AG04449 (cell line): ENCODE measurements at regions of chr1 and their contacts with region 1.

Region 1: GRCh38 chr1:207885129-207886032 is 25.5 kb downstream of the CD34 start:
- DNase-seq: peak; percentile 37
- H3K4me3 ChIP-seq: no peak overlapping the region
- CTCF ChIP-seq: peak; percentile 92

Region 2: DNA sequence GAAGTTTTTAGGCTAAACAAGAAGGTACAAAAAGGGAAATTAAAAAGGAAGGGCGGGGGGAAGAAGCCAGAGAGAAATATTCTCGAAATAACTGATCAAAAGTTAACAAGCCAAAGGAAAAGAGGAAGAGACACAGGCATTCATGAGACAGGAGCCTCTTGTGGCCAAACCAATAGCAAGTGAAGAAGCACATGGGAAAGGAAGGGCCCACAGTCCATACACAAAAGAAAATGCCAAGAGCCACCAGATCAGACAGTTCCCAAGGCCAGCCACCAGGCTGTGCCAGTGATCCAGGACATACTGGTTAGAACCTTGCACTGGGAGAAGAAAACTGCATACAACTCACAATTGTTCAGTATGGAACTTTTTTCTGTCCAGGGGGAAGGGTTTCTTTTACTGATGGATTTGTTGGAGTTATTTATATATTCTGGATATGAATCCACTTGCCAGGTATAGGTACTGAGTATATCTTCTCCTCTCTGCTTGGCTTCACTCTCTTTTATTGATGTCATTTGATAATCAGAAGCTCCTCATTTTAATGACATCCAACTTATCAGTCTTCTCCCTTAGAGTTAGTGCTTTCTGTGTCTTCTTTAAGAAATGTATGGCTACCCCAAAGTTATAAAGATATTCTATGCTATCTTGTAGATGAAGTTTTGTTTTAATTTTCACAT is 56.8 kb before region 1 on chr1:
- CTCF ChIA-PET with region 1: interaction called, 17 read pairs
- POLR2A ChIA-PET with region 1: no interaction called
- DNase-seq: no peak
- H3K4me3 ChIP-seq: no peak overlapping the region
- CTCF ChIP-seq: peak; percentile 77

Region 3: DNA sequence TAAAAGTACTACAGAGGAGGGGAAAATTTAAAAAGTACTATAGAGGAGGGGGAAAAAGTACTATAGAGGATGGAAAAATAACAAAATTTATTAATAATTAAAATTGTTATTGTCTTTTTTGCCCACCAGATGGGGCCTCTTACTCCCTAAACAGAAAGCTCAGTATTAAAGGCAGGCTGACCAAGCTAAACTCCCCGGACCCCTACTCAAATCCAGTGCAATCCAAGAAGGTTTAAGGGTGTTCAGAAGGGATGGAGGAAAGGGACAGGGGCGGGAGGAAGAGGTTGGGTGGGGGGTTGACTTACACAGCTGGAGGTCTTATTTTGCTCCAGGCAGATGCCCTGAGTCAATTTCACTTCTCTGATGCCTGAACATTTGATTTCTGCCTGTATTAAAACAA is 11.8 kb after region 1 on chr1:
- CTCF ChIA-PET with region 1: interaction called, 104 read pairs
- POLR2A ChIA-PET with region 1: no interaction called
- DNase-seq: no peak
- H3K4me3 ChIP-seq: no peak overlapping the region
- CTCF ChIP-seq: no peak

Region 4: DNA sequence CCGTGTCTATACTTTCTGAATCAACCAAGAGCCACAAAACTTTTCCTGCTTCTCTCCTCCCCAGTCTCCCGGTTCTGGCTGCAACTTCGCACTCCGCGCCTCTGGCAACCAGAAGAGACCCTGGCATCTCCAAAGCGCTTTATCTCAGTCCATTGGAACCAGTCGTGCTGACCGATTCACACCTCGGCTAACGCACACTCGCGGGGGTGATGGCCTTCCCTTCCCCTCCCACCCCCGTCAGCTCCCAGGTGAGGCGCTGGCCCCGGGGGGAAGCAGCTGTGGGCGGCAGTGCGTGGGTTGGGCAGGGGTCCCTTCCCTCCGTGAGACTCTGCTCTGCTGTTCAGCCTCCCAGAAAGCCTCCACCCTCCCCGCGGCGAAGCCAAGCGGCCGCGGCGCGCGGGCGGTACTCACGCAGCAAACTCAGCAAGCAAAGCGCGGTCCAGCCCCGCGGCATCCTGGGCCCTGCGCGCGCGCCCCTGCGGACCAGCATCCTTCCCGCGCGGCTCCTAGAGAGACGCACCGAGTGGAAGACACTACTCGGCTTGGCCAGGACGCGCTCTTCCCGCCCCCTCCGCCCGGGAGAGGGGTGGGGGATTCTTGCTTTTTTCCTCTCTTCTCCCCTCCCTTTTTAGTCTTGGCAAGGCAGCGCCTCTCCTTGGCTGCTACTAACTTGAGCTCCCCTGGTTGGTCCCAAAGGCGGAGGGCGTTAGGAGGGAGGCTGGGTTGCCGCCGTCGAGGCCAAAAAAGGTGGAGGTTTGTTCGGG is 25.4 kb after region 1 on chr1 and contains the start of gene CD34:
- CTCF ChIA-PET with region 1: interaction called, 36 read pairs
- POLR2A ChIA-PET with region 1: no interaction called
- DNase-seq: no peak
- H3K4me3 ChIP-seq: peak within 1 kb of the TSS; percentile 36
- CTCF ChIP-seq: no peak

Region 5: DNA sequence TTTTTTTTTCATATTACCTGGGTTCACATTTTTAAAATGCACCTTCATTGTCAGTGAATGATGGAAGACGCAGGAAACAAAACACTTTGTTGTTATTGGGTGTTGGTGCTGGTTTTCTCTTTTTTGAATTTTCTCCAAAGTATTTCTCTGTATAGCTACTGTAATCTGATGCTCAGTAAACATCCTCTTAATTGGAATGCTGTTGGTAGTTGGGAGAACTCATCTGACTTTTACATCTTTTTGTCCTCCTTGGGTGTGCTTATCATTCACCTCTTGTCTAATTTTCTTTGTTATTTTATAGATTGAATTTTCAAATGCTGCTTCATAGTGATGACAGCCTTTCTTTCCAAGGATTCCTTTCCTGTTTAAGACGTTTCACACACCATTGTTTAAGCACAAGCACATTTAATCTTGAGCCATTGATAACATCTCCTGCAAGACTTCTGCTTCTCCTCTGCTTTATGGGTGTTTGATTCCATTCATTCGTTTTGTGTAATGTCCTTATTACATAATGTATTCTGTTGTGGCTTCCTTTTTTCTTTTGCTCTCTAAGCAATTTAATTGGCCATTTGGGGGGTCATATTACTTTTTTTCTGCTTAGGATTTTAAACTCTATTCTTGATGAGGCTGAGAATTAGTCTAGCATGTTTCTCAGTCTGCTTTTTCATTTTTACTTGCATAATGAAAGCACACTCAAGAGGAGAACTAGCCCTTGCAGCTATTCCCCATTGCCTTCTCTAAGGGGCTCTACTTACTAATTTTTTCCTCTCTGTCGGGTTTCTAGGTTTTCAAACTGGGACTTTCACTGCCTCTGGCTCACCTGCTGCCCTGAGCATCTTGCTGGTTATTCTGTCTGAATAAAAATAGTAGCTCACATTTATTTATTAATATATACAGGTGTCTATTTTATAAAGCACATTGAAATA is 67.5 kb after region 1 on chr1:
- CTCF ChIA-PET with region 1: interaction called, 429 read pairs
- POLR2A ChIA-PET with region 1: no interaction called
- DNase-seq: no peak
- H3K4me3 ChIP-seq: no peak overlapping the region
- CTCF ChIP-seq: no peak

Region 6: GRCh38 chr1:207997486-207998268 is 112.3 kb after region 1 on chr1:
- CTCF ChIA-PET with region 1: interaction called, 132 read pairs
- POLR2A ChIA-PET with region 1: no interaction called
- DNase-seq: no peak
- H3K4me3 ChIP-seq: no peak overlapping the region
- CTCF ChIP-seq: peak; percentile 90

Region 7: DNA sequence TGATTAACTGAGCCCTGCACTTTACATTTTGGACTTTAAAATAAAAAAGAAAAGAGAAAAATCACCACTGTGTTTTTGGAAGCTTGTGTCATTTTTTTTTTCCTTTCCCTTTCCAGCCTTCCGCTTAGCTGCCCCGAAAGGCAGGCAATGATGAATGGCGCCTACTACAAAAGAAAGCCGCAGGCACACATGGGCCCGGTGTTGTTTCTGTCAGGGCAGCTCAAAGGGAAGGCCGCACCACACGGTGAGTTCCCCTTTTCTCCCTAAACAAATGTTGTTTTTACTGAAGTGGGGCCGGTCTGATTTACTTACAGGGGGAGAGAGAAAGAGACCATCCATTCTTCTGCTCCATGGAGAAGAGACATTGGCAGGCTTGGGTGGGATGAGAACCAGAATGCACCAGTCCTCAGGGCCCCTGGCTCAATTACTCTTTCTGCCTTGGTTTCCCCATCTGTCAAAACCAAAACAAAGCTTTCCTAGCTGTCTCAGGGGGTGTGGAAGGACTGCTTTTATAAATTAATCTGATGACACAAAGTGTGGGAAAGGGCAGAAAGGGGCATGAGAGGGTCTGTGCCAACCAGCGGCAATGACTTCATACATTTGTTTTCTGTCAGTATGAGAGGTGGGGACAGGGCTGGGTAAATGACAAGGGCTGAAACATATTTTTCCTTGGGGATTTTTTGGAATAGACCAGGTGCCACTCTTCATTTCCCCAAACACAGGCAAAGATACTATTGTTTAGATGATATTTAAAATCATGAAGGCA is 450.2 kb after region 1 on chr1:
- CTCF ChIA-PET with region 1: no interaction called
- POLR2A ChIA-PET with region 1: no interaction called
- DNase-seq: no peak
- H3K4me3 ChIP-seq: no peak overlapping the region
- CTCF ChIP-seq: no peak

Region 8: DNA sequence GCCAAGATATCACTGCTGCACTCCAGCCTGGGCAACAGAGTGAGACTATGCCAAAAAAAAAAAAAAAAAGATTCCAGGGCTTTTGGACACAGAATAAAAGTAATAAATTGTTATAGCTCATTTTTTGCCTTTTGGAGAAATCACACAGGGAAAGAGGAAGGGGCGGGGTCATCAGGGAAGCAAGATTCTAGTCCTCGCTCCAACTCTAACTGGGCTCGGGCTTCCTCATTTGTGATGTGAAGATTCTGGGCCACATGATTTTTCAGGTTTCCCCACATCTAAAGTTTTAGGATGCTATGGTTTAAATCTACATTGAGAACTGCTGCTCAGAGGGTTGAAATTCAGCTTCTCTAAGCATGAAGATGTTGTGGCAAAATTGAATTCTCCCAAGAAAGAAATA is 538.1 kb after region 1 on chr1:
- CTCF ChIA-PET with region 1: no interaction called
- POLR2A ChIA-PET with region 1: no interaction called
- DNase-seq: no peak
- H3K4me3 ChIP-seq: no peak overlapping the region
- CTCF ChIP-seq: no peak